Common myeloid progenitor, CD34-positive (primary cell): ENCODE measurements at regions of chr3 and their contacts with region 1.

Region 1: DNA sequence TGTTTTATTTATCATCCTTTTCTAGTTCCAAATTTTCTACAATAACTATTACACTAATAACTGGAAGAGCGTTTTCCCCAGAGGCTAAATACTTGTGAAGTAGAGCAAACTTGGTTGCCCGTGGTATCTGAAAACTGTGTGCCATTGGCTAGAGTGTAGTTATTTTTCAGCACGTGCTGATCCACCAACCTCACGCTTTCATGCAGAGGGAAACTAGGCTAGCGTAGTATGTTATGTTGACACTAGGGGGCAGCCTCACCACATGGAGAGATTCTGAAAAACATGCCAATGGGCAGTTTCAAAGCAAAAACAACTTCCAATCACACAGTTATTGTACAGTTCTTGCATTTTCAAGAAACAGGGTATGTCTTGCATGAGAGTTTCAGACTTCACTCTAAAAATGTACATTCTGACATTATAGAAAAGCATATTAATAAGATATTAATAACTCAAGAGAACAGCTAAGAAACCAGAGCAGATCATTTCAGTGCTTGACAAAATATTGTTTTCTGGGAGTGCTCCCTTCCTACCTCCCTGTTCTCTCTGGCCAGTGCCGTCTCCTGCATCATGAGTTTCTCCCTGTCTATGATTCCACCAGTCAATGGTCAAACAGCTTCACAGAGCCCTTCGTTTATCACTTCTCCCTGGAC is 39.7 kb downstream of the SPATA12 start:
- DNase-seq: peak; percentile 77 to 87 (median 84)
- H3K4me3 ChIP-seq: no peak overlapping the region
- H3K27ac ChIP-seq: no peak overlapping the region
- H3K4me1 ChIP-seq: peaks cover 0 to 4% (median 0%) of the 10 kb centered on the region in 4 experiments
- H3K27me3 ChIP-seq: peaks cover 0 to 5% (median 0%) of the 10 kb centered on the region in 5 experiments

Region 2: DNA sequence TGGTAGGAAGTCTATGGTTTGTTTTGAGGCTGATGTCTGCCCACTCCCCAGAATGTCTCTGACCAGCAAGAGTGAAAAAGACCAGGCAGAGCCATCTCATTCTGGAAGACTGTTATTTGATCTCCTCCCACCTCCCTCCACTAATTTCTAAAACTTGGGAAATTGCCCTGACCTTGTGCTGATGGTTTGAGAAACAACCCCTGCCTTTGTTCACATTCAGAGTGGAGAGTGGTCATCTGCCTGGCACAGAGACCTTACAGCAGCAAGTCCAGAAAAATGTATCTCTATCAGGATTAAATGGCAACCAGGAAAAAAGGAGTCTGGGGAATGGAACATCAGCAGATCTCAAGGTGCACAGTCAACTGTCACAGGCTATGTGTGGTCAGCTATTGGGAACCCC is 14.0 kb before region 1 on chr3:
- CTCF ChIA-PET with region 1: interaction called, 36 read pairs
- POLR2A ChIA-PET with region 1: no interaction called
- DNase-seq: no peak
- H3K4me3 ChIP-seq: no peak overlapping the region
- H3K27ac ChIP-seq: no peak overlapping the region
- H3K4me1 ChIP-seq: peaks cover 0 to under 1% (median 0%) of the 10 kb centered on the region in 4 experiments
- H3K27me3 ChIP-seq: no peaks in the 10 kb centered on the region

Region 3: DNA sequence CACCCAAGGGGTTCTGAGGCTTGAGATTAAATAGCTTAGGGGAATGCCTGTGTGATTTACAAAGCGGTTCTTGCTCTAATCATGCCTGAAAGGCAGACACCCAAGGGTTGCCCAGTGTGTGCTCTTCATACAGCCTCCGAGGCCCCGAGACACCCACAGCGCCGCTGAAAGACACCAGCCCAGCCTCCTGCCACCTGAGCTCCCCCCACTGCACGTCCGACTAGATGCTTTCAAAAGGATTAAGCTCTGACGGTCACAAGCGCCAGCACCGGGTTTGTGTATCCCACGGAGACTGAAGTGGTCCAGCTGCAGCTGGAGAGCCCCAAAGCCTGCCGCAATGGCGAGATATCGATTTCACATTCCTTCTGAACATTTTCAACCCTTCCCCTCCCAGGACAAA is 10.6 kb after region 1 on chr3:
- CTCF ChIA-PET with region 1: interaction called, 12 read pairs
- POLR2A ChIA-PET with region 1: no interaction called
- DNase-seq: no peak
- H3K4me3 ChIP-seq: no peak overlapping the region
- H3K27ac ChIP-seq: no peak overlapping the region
- H3K4me1 ChIP-seq: no peaks in the 10 kb centered on the region
- H3K27me3 ChIP-seq: peaks cover 0 to 9% (median 0%) of the 10 kb centered on the region in 5 experiments

Region 4: DNA sequence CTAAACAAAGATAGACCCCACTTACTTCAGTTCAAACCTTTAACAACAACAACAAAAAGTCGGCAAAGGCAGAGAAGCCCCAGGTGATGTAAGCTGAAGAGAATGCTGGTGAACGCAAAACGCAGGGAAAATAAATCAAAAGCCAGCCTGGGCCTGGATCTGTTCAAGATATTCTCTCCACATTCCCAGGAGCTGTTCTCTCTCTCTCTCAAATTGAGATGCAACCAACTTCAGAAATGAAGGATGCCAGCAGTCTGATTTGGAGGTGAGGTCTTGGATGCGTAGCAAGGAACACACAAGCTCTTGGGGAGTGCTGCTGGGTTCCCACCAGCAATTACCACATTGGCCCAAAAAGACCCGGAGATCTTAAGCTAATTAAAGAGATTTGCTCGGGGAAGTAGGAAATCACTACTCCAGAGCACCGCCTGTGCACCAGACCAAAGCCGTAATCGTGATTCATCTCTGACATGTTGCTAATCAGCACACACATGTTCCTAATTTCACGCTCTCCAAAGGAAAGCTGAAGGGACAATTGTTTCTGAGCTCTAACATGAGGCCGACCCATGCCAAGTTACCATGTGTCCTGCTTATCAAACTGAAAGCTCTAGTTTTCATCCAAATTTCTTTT is 27.8 kb after region 1 on chr3:
- CTCF ChIA-PET with region 1: no interaction called
- POLR2A ChIA-PET with region 1: no interaction called
- DNase-seq: no peak
- H3K4me3 ChIP-seq: no peak overlapping the region
- H3K27ac ChIP-seq: no peak overlapping the region
- H3K4me1 ChIP-seq: peaks cover 0 to 7% (median 3%) of the 10 kb centered on the region in 4 experiments
- H3K27me3 ChIP-seq: peaks cover 0 to 3% (median 0%) of the 10 kb centered on the region in 5 experiments

Region 5: DNA sequence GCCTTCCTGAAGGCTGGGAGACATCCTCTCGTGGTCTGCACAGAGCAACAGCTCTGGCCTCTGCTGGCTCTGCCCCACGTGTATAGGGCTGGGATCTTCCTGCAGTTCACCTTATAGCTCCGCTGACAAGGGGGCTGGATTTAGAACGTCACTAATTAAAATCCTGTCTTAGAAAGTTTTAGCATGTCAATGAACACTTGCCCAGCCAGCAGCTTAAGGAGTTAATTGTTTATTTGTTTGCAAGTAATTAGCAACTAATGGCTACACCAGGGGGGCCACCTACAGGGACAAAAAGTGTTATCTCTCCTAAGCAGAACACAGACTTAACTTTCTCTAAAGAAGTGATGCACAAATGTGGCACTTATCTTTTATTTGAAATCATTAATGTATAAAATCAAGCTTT is 99.7 kb after region 1 on chr3 and contains the start of gene HESX1:
- CTCF ChIA-PET with region 1: no interaction called
- POLR2A ChIA-PET with region 1: no interaction called
- DNase-seq: peak in 2 of 3 donors; percentile 17 to 36
- H3K4me3 ChIP-seq: no peak within 1 kb of the TSS
- H3K27ac ChIP-seq: no peak within 1 kb of the TSS
- H3K4me1 ChIP-seq: peaks cover 0 to 5% (median 2%) of the 10 kb centered on the region in 4 experiments
- H3K27me3 ChIP-seq: no peaks in the 10 kb centered on the region

Region 6: GRCh38 chr3:57852896-57853295 is 752.7 kb after region 1 on chr3:
- CTCF ChIA-PET with region 1: interaction called, 10 read pairs
- POLR2A ChIA-PET with region 1: no interaction called
- DNase-seq: peak; percentile 9 to 21 (median 17)
- H3K4me3 ChIP-seq: no peak overlapping the region
- H3K27ac ChIP-seq: no peak overlapping the region
- H3K4me1 ChIP-seq: peaks cover 0 to 2% (median 0%) of the 10 kb centered on the region in 4 experiments
- H3K27me3 ChIP-seq: no peaks in the 10 kb centered on the region